ENCODE measurements at regions of chr4 and their contacts with region 1.

Region 1: GRCh38 chr4:89906777-89907521 is 12.3 kb downstream of the MMRN1 start:
- DNase-seq: no peak
- ATAC-seq: no peak
- H3K4me3 ChIP-seq: no peak overlapping the region
- H3K4me3 Mint-ChIP-seq: no peak overlapping the region
- H3K27ac ChIP-seq: no peak overlapping the region
- H3K27ac Mint-ChIP-seq: no peak overlapping the region
- H3K4me1 ChIP-seq: no peaks in the 10 kb centered on the region
- H3K4me1 Mint-ChIP-seq: no peaks in the 10 kb centered on the region
- H3K27me3 ChIP-seq: no peaks in the 10 kb centered on the region
- H3K27me3 Mint-ChIP-seq: peaks cover 8% of the 10 kb centered on the region
- CTCF ChIP-seq: no peak

Region 2: GRCh38 chr4:89434364-89434988 is 472.5 kb before region 1 on chr4:
- CTCF ChIA-PET with region 1: no interaction called
- POLR2A ChIA-PET with region 1: no interaction called
- intact Hi-C with region 1: no loop called
- DNase-seq: peak in 2 of 9 experiments; percentile 57 to 70
- ATAC-seq: peak; percentile 67
- H3K4me3 ChIP-seq: no peak overlapping the region
- H3K4me3 Mint-ChIP-seq: no peak overlapping the region
- H3K27ac ChIP-seq: no peak overlapping the region
- H3K27ac Mint-ChIP-seq: no peak overlapping the region
- H3K4me1 ChIP-seq: peaks cover 6% of the 10 kb centered on the region
- H3K4me1 Mint-ChIP-seq: peaks cover 7% of the 10 kb centered on the region
- H3K27me3 ChIP-seq: no peaks in the 10 kb centered on the region
- H3K27me3 Mint-ChIP-seq: peaks cover 4% of the 10 kb centered on the region
- CTCF ChIP-seq: peak; percentile 78

Region 3: GRCh38 chr4:89598602-89599001 is 308.3 kb before region 1 on chr4:
- CTCF ChIA-PET with region 1: no interaction called
- POLR2A ChIA-PET with region 1: no interaction called
- intact Hi-C with region 1: loop called (anchors 2 to 5 kb)
- DNase-seq: peak in 1 of 9 experiments; percentile 3
- ATAC-seq: no peak
- H3K4me3 ChIP-seq: no peak overlapping the region
- H3K4me3 Mint-ChIP-seq: no peak overlapping the region
- H3K27ac ChIP-seq: no peak overlapping the region
- H3K27ac Mint-ChIP-seq: no peak overlapping the region
- H3K4me1 ChIP-seq: no peaks in the 10 kb centered on the region
- H3K4me1 Mint-ChIP-seq: no peaks in the 10 kb centered on the region
- H3K27me3 ChIP-seq: no peaks in the 10 kb centered on the region
- H3K27me3 Mint-ChIP-seq: peaks cover 10% of the 10 kb centered on the region
- CTCF ChIP-seq: no peak

Region 4: GRCh38 chr4:89657931-89658700 is 248.8 kb before region 1 on chr4:
- CTCF ChIA-PET with region 1: interaction called, 5 read pairs
- POLR2A ChIA-PET with region 1: no interaction called
- intact Hi-C with region 1: loop called (anchors 1 to 5 kb)
- DNase-seq: peak in 2 of 9 experiments; percentile 4 to 22
- ATAC-seq: no peak
- H3K4me3 ChIP-seq: no peak overlapping the region
- H3K4me3 Mint-ChIP-seq: no peak overlapping the region
- H3K27ac ChIP-seq: no peak overlapping the region
- H3K27ac Mint-ChIP-seq: no peak overlapping the region
- H3K4me1 ChIP-seq: no peaks in the 10 kb centered on the region
- H3K4me1 Mint-ChIP-seq: no peaks in the 10 kb centered on the region
- H3K27me3 ChIP-seq: no peaks in the 10 kb centered on the region
- H3K27me3 Mint-ChIP-seq: peaks cover 2% of the 10 kb centered on the region
- CTCF ChIP-seq: peak; percentile 36

Region 5: GRCh38 chr4:89878611-89879010 is 28.3 kb before region 1 on chr4:
- CTCF ChIA-PET with region 1: no interaction called
- POLR2A ChIA-PET with region 1: no interaction called
- intact Hi-C with region 1: no loop called
- DNase-seq: no peak
- ATAC-seq: no peak
- H3K4me3 ChIP-seq: no peak overlapping the region
- H3K4me3 Mint-ChIP-seq: no peak overlapping the region
- H3K27ac ChIP-seq: no peak overlapping the region
- H3K27ac Mint-ChIP-seq: no peak overlapping the region
- H3K4me1 ChIP-seq: no peaks in the 10 kb centered on the region
- H3K4me1 Mint-ChIP-seq: peaks cover 4% of the 10 kb centered on the region
- H3K27me3 ChIP-seq: no peaks in the 10 kb centered on the region
- H3K27me3 Mint-ChIP-seq: peaks cover 4% of the 10 kb centered on the region
- CTCF ChIP-seq: no peak